IMR-90 (cell line): ENCODE measurements at regions of chr15 and their contacts with region 1.

Region 1: GRCh38 chr15:57541805-57542504 is 49.7 kb upstream of the MYZAP start:
- DNase-seq: peak; percentile 75
- ATAC-seq: peak; percentile 94
- H3K4me3 ChIP-seq: no peak overlapping the region
- H3K27ac ChIP-seq: no peak overlapping the region
- H3K4me1 ChIP-seq: no peaks in the 10 kb centered on the region
- H3K27me3 ChIP-seq: peaks cover 34% of the 10 kb centered on the region
- CTCF ChIP-seq: peak; percentile 90
- POLR2A ChIP-seq: no peak
- RAD21 ChIP-seq: peak; percentile 67

Region 2: GRCh38 chr15:57146506-57147201 is 395.3 kb before region 1 on chr15:
- CTCF ChIA-PET with region 1: no interaction called
- POLR2A ChIA-PET with region 1: no interaction called
- dilution Hi-C with region 1: no loop called
- in situ Hi-C with region 1: loop called (anchors 10 kb)
- intact Hi-C with region 1: no loop called
- DNase-seq: peak; percentile 73
- ATAC-seq: peak; percentile 52
- H3K4me3 ChIP-seq: peak overlapping the region; percentile 20; the same call in 1 of the 2 replicates
- H3K27ac ChIP-seq: no peak overlapping the region; the same call in 1 of the 2 replicates
- H3K4me1 ChIP-seq: peaks cover 25% of the 10 kb centered on the region
- H3K27me3 ChIP-seq: no peaks in the 10 kb centered on the region
- CTCF ChIP-seq: peak; percentile 88
- POLR2A ChIP-seq: no peak
- RAD21 ChIP-seq: peak; percentile 83